ENCODE measurements at regions of chr6 and their contacts with region 1.

Region 1: GRCh38 chr6:165850434-165851019 is 187.5 kb upstream of the PDE10A start:
- DNase-seq: peak; percentile 73
- H3K4me3 Mint-ChIP-seq: no peak overlapping the region
- H3K27ac Mint-ChIP-seq: no peak overlapping the region
- H3K4me1 Mint-ChIP-seq: peaks cover 12% of the 10 kb centered on the region
- H3K27me3 Mint-ChIP-seq: peaks cover 62% of the 10 kb centered on the region

Region 2: GRCh38 chr6:164859816-164860215 is 990.7 kb before region 1 on chr6:
- CTCF ChIA-PET with region 1: no interaction called
- intact Hi-C with region 1: no loop called
- DNase-seq: no peak
- H3K4me3 Mint-ChIP-seq: no peak overlapping the region
- H3K27ac Mint-ChIP-seq: no peak overlapping the region
- H3K4me1 Mint-ChIP-seq: no peaks in the 10 kb centered on the region
- H3K27me3 Mint-ChIP-seq: no peaks in the 10 kb centered on the region

Region 3: DNA sequence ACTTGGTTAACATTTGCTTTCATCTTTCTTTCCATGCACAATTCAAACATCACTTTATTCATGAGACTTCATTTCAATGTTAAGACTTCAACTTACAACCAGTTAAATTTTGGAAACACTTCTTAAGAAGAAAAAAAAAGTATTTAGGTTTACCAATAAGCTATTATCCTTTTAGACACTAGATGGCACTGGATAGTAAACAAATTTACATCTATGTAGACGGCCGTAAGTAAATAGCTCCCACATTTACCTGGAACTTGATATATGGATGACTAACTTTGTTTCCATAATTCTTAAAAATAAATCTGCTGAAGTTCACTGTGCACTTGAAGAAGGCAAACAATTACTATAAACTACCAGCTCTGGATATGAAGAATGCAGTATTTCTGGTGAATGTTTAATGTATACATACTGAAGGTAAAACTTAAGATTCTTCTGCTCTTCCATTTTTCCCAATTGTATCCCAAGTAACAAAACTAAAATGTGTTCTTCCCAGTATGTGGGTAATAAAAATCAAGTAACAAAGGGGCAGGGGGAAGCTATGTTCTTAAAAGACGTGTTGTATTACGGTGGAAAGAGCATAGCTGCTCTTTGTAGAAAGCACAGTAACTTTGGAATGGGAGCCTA is 410.5 kb before region 1 on chr6:
- CTCF ChIA-PET with region 1: interaction called, 8 read pairs
- intact Hi-C with region 1: loop called (anchors 1 kb)
- DNase-seq: no peak
- H3K4me3 Mint-ChIP-seq: no peak overlapping the region
- H3K27ac Mint-ChIP-seq: no peak overlapping the region
- H3K4me1 Mint-ChIP-seq: no peaks in the 10 kb centered on the region
- H3K27me3 Mint-ChIP-seq: no peaks in the 10 kb centered on the region

Region 4: GRCh38 chr6:165729307-165729936 is 121.1 kb before region 1 on chr6:
- CTCF ChIA-PET with region 1: interaction called, 5 read pairs
- intact Hi-C with region 1: loop called (anchors 1 kb)
- DNase-seq: peak; percentile 54
- H3K4me3 Mint-ChIP-seq: no peak overlapping the region
- H3K27ac Mint-ChIP-seq: no peak overlapping the region
- H3K4me1 Mint-ChIP-seq: no peaks in the 10 kb centered on the region
- H3K27me3 Mint-ChIP-seq: peaks cover 2% of the 10 kb centered on the region

Region 5: GRCh38 chr6:165871571-165871970 is 21.0 kb after region 1 on chr6:
- CTCF ChIA-PET with region 1: no interaction called
- intact Hi-C with region 1: no loop called
- DNase-seq: no peak
- H3K4me3 Mint-ChIP-seq: no peak overlapping the region
- H3K27ac Mint-ChIP-seq: no peak overlapping the region
- H3K4me1 Mint-ChIP-seq: no peaks in the 10 kb centered on the region
- H3K27me3 Mint-ChIP-seq: peaks cover 9% of the 10 kb centered on the region

Region 6: GRCh38 chr6:166228839-166229528 is 378.5 kb after region 1 on chr6:
- CTCF ChIA-PET with region 1: no interaction called
- intact Hi-C with region 1: no loop called
- DNase-seq: no peak
- H3K4me3 Mint-ChIP-seq: no peak overlapping the region
- H3K27ac Mint-ChIP-seq: no peak overlapping the region
- H3K4me1 Mint-ChIP-seq: peaks cover 17% of the 10 kb centered on the region
- H3K27me3 Mint-ChIP-seq: peaks cover 17% of the 10 kb centered on the region

Measured in activated naive CD4-positive, alpha-beta T cell treated with anti-CD3 and anti-CD28 coated beads for 36 hours (primary cell).